ENCODE measurements at regions of chr1 and their contacts with region 1.

Region 1: DNA sequence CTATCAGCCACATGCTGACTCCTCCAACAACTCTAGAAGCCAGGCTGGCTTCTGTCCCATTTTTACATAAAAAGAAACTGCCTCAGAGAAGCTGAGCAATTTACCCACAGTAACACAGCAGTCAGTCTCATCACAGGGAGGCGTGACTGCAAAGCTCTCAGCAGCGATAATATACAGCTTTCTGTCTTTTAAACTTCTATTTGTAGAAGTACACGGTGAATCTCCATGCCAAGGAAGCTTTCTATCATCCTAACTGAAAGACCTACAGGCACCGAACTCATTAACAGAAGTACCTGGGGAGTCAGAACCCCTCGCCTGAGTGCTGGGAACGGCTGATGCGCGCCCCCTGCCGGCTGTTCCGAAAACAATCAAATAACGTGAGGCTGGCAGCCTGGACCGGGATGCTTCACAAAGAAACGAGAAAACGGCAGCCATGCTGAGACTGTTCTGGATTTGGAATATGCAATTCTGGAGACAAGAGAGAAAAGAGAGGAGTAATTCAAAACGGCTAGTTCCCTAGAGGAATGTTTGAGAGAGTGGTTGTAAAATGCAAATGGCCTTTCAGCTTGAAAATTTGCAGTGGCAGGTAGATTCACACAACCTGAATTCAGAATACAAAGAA is 43.5 kb upstream of the RAB4A start:
- DNase-seq: peak; percentile 85
- H3K4me3 Mint-ChIP-seq: no peak overlapping the region
- H3K27ac Mint-ChIP-seq: no peak overlapping the region
- H3K4me1 Mint-ChIP-seq: peaks cover 21% of the 10 kb centered on the region
- H3K27me3 Mint-ChIP-seq: peaks cover 2% of the 10 kb centered on the region

Region 2: DNA sequence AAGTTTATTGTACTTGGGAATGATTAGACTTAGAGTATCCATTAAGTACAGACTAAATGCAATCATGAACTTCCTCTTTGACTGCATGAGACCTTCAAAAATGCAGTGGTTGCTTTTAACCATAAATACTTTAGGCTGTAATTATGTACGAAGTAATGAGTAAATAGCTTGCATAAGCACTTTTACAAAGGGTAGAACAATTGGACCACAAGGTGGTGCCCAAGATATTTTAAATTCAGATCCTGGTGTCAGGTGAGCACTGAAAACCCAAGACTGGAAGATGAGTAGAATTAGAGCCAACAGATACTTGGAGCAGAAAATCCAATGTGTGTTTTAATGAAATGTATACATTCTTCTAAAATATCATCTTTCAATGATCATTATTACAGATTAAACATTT is 535.5 kb before region 1 on chr1:
- CTCF ChIA-PET with region 1: interaction called, 11 read pairs
- intact Hi-C with region 1: loop called (anchors 2 kb)
- DNase-seq: peak; percentile 46
- H3K4me3 Mint-ChIP-seq: no peak overlapping the region
- H3K27ac Mint-ChIP-seq: no peak overlapping the region
- H3K4me1 Mint-ChIP-seq: peaks cover 10% of the 10 kb centered on the region
- H3K27me3 Mint-ChIP-seq: peaks cover 9% of the 10 kb centered on the region

Region 3: DNA sequence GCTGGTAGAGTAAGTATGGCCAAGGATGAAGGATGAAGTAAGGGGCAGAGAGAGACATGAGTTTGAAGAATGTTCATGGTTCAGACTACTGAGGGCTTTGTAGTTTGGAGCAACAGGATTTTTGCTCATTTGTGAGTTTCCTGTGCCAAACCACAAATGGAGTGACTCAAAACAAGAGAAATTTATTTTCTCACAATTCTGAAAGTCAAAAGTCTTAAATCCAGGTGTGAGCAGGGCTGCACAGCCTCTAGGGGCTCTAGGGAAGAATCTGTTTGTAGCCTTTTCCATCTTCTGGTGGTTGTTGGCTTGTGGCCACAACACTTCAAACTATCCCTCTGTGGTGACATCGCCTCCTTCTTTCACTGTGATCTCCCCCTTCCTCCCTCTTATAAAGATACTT is 433.2 kb before region 1 on chr1:
- CTCF ChIA-PET with region 1: no interaction called
- intact Hi-C with region 1: loop called (anchors 5 kb)
- DNase-seq: peak; percentile 52
- H3K4me3 Mint-ChIP-seq: no peak overlapping the region
- H3K27ac Mint-ChIP-seq: no peak overlapping the region
- H3K4me1 Mint-ChIP-seq: peaks cover 6% of the 10 kb centered on the region
- H3K27me3 Mint-ChIP-seq: no peaks in the 10 kb centered on the region

Region 4: GRCh38 chr1:229027622-229028182 is 199.7 kb before region 1 on chr1:
- CTCF ChIA-PET with region 1: no interaction called
- intact Hi-C with region 1: loop called (anchors 1 kb)
- DNase-seq: peak; percentile 62
- H3K4me3 Mint-ChIP-seq: peak overlapping the region; percentile 62
- H3K27ac Mint-ChIP-seq: peak overlapping the region; percentile 54
- H3K4me1 Mint-ChIP-seq: peaks cover 11% of the 10 kb centered on the region
- H3K27me3 Mint-ChIP-seq: no peaks in the 10 kb centered on the region

Region 5: DNA sequence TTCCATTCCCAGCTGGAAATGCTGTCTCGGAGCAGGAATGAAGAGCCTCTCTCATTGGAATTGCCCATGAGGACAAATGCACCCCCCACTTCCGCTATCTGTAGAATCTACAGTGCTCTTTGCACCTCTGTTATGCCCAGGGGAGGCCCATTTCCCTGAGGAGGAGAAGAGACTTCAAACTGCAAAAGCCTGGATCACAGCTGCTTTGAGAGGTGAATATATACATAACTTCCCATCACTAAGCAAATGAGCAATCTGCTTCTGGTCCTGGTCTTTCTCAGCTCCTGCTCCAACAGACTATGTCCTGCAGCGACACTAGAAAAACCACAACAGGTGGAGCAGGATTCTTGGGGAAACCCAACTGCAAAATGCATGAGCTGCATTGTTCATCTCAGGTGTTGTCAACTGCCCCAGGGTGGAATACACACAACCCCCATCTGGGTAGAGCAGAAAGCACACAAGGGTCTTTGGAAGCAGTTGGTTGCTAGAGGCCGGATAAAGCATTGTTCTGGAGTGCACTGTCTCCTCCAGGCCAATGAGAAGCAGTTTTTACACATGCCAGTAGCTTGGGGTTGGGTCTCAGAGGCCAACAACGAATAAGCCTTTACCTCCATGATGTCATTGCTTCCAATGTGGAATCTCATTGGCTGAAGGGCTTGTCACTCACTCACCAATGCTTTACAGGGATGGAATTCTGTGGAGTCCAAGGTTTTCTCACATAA is 24.2 kb before region 1 on chr1:
- CTCF ChIA-PET with region 1: interaction called, 16 read pairs
- intact Hi-C with region 1: no loop called
- DNase-seq: no peak
- H3K4me3 Mint-ChIP-seq: no peak overlapping the region
- H3K27ac Mint-ChIP-seq: no peak overlapping the region
- H3K4me1 Mint-ChIP-seq: peaks cover 27% of the 10 kb centered on the region
- H3K27me3 Mint-ChIP-seq: no peaks in the 10 kb centered on the region

Region 6: GRCh38 chr1:229841230-229841629 is 613.8 kb after region 1 on chr1:
- CTCF ChIA-PET with region 1: no interaction called
- intact Hi-C with region 1: no loop called
- DNase-seq: no peak
- H3K4me3 Mint-ChIP-seq: no peak overlapping the region
- H3K27ac Mint-ChIP-seq: no peak overlapping the region
- H3K4me1 Mint-ChIP-seq: no peaks in the 10 kb centered on the region
- H3K27me3 Mint-ChIP-seq: peaks cover 9% of the 10 kb centered on the region

Measured in activated naive CD4-positive, alpha-beta T cell treated with anti-CD3 and anti-CD28 coated beads for 36 hours (primary cell).